Common myeloid progenitor, CD34-positive (primary cell): ENCODE measurements at regions of chr12 and their contacts with region 1.

Region 1: DNA sequence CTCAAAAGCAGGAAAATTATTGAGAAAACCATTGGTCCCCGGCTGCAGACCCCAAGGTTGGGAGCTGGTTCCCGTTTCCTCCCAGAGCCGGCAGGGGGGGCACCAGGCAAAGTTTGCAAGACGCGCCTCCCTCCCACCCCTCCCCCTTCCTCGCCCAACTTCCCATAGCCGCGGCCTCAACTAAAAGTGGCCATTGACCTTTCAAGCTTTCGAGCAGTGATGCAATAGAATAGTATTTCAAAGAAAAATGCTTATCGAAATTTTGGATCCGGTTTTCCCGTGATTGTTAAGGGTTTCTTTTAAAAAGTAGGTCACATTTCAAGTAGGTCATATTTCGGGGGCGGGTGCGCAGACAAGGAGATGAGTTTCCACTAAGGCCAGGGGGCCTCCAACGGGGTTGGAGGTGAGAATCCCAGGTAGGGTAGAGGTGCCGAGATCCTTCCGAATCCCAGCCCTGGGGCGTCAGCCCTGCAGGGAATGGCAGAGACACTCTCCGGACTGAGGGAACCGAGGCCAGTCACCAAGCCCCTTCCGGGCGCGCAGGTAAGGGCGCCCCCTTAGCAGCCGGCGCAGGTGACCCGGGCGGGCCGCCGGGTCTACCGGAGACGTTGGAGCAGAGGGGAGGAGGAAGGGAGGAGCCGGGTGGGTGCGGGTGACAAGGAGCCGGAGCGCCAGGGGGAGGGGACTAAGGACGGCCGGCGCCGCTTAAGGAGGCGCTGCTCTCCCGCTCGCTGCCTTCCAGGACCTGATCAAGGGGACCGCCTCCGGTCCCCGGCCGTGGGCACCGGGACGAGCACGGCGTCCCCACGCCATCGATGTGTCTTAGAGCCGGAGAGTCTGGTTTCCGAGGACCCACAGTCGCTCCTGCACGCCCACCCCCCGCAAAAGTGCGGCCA is 2.6 kb upstream of the SOCS2 start:
- DNase-seq: peak; percentile 86 to 88 (median 87)
- H3K4me3 ChIP-seq: peak overlapping the region; percentile 79 to 96 (median 87)
- H3K27ac ChIP-seq: peak overlapping the region; percentile 58 to 85
- H3K4me1 ChIP-seq: peaks cover 3 to 39% (median 25%) of the 10 kb centered on the region in 4 experiments
- H3K27me3 ChIP-seq: no peaks in the 10 kb centered on the region

Region 2: DNA sequence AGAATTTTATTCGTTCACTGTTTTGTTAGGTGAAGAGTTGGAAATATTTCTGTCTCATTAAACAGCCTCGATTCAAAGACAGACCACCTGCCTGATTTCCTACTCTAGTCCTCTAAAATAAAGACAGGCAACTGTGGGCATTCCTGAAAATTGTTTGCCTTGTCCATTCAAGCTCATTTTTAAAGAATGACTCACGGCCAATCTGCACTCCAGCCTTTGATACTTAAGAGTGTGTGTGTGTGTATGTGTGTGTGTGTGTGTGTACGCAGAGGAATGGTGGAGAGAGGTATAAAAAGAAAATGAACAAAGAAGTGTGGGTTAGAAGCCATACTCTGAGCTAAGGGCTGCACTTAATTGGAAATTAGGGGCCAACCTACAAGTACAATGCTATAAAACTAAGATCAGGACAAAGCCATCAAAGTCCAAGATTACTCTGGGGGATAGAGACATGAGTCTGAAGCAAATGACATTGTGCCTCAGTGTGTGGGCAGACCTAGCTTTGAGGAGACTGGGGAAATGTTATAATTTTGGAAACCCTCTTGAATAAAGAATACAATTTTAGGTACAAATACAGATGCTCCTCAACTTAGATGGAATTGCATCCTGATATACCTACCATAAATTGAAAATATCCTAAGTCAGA is 43.0 kb before region 1 on chr12:
- CTCF ChIA-PET with region 1: interaction called, 56 read pairs
- POLR2A ChIA-PET with region 1: no interaction called
- DNase-seq: no peak
- H3K4me3 ChIP-seq: no peak overlapping the region
- H3K27ac ChIP-seq: no peak overlapping the region
- H3K4me1 ChIP-seq: peaks cover 5 to 26% (median 15%) of the 10 kb centered on the region in 4 experiments
- H3K27me3 ChIP-seq: no peaks in the 10 kb centered on the region

Region 3: GRCh38 chr12:93591137-93591868 is 21.4 kb after region 1 on chr12:
- CTCF ChIA-PET with region 1: interaction called, 114 read pairs
- POLR2A ChIA-PET with region 1: interaction called, 8 read pairs
- DNase-seq: peak; percentile 79 to 91 (median 86)
- H3K4me3 ChIP-seq: peak overlapping the region; percentile 29 to 92 (median 84)
- H3K27ac ChIP-seq: peak overlapping the region; percentile 71 to 90
- H3K4me1 ChIP-seq: peaks cover 27 to 72% (median 47%) of the 10 kb centered on the region in 4 experiments
- H3K27me3 ChIP-seq: no peaks in the 10 kb centered on the region

Region 4: DNA sequence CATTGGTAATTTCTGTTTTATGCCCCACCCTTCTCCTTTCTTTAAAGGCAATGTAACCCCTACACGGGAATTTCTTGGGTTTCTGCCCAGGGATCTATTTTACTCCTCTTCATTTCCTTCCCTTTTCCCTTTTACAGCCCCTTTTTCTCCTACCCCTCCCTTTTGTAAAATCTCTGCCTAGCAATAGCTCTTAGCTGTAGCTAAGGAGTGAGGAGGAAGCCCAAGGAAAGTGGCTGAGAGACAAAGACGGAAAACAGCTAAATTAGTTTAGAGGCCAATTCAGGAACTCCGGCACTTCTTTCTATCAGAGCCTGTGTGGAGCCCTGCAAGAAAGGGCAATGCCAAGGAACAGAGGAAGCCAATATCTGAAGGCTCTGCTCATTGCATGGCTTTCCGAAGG is 42.9 kb after region 1 on chr12:
- CTCF ChIA-PET with region 1: no interaction called
- POLR2A ChIA-PET with region 1: no interaction called
- DNase-seq: no peak
- H3K4me3 ChIP-seq: no peak overlapping the region
- H3K27ac ChIP-seq: no peak overlapping the region
- H3K4me1 ChIP-seq: peaks cover 0 to 6% (median 3%) of the 10 kb centered on the region in 4 experiments
- H3K27me3 ChIP-seq: no peaks in the 10 kb centered on the region

Region 5: DNA sequence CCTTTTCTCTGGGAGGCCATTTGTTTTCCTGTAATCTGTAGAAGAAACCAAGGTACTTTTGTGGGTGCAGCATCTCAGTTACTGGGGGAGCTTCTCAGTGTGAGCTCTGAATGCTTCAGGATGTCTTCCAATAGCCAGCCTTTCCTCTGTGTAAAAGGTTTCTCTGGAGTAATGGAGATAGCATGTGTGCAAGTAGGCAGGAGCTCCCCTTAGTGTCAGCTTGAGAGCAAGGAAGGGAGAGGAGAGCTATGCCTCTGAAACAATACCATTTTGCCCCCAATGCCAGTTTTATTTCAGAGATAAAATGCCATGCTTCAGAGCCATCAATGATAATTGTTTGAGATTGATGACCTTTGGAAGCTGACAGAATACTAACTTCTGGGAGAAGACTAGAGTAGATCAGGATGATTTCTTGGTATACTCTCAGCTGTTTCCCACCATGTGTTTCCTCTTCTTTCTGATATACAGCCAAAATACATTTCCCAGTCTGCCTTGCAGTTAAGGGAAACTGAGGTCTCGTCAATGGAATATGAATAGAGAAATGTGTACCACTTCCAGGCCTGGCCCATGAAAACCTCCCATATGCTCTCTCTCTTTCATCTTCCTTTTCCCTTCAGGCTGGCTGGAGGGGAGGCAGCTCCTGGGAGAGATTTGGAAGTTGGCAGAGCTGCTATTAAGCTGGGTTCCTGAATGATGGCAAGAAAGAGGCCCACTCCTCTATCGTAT is 233.0 kb after region 1 on chr12:
- CTCF ChIA-PET with region 1: interaction called, 20 read pairs
- POLR2A ChIA-PET with region 1: no interaction called
- DNase-seq: peak; percentile 18 to 47 (median 43)
- H3K4me3 ChIP-seq: peak overlapping the region in 5 of 7 experiments; percentile 19 to 73 (median 52)
- H3K27ac ChIP-seq: peak overlapping the region; percentile 48 to 81
- H3K4me1 ChIP-seq: peaks cover 7 to 34% (median 12%) of the 10 kb centered on the region in 4 experiments
- H3K27me3 ChIP-seq: no peaks in the 10 kb centered on the region